ENCODE measurements at regions of chr15 and their contacts with region 1.

Region 1: GRCh38 chr15:78308422-78309032 is 9.1 kb upstream of the SKIC8 start:
- DNase-seq: peak; percentile 75
- H3K4me3 Mint-ChIP-seq: no peak overlapping the region
- H3K27ac Mint-ChIP-seq: no peak overlapping the region
- H3K4me1 Mint-ChIP-seq: no peaks in the 10 kb centered on the region
- H3K27me3 Mint-ChIP-seq: no peaks in the 10 kb centered on the region

Region 2: GRCh38 chr15:78415286-78415685 is 106.8 kb after region 1 on chr15:
- CTCF ChIA-PET with region 1: interaction called, 3 read pairs
- intact Hi-C with region 1: loop called (anchors 1 kb)
- DNase-seq: no peak
- H3K4me3 Mint-ChIP-seq: no peak overlapping the region
- H3K27ac Mint-ChIP-seq: no peak overlapping the region
- H3K4me1 Mint-ChIP-seq: no peaks in the 10 kb centered on the region
- H3K27me3 Mint-ChIP-seq: no peaks in the 10 kb centered on the region

Region 3: GRCh38 chr15:78422571-78423340 is 114.2 kb after region 1 on chr15:
- CTCF ChIA-PET with region 1: interaction called, 8 read pairs
- intact Hi-C with region 1: loop called (anchors 1 kb)
- DNase-seq: peak; percentile 76
- H3K4me3 Mint-ChIP-seq: no peak overlapping the region
- H3K27ac Mint-ChIP-seq: no peak overlapping the region
- H3K4me1 Mint-ChIP-seq: peaks cover 14% of the 10 kb centered on the region
- H3K27me3 Mint-ChIP-seq: peaks cover 8% of the 10 kb centered on the region

Region 4: DNA sequence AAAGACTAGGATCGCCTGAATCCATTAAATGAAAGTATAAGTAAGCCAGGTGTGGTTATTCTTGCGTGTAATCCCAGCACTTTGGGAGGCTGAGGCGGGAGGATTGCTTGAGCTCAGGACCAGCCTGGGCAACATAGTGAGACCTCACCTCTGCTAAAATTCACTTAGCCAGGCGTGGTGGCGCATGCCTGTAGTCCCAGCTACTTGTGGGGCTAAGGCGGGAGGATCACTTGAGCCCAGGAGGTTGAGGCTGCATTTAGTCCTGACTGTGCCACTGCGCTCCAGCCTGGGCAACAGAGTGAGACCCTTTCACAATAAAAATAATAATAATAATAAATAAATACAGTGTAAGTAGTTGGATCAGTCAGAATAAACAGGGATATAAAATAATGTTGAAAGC is 173.4 kb after region 1 on chr15:
- CTCF ChIA-PET with region 1: interaction called, 3 read pairs
- intact Hi-C with region 1: loop called (anchors 2 kb)
- DNase-seq: no peak
- H3K4me3 Mint-ChIP-seq: no peak overlapping the region
- H3K27ac Mint-ChIP-seq: no peak overlapping the region
- H3K4me1 Mint-ChIP-seq: peaks cover 2% of the 10 kb centered on the region
- H3K27me3 Mint-ChIP-seq: no peaks in the 10 kb centered on the region

Region 5: GRCh38 chr15:78709263-78709882 is 400.8 kb after region 1 on chr15:
- CTCF ChIA-PET with region 1: interaction called, 6 read pairs
- intact Hi-C with region 1: loop called (anchors 2 kb)
- DNase-seq: peak; percentile 79
- H3K4me3 Mint-ChIP-seq: no peak overlapping the region
- H3K27ac Mint-ChIP-seq: no peak overlapping the region
- H3K4me1 Mint-ChIP-seq: peaks cover 4% of the 10 kb centered on the region
- H3K27me3 Mint-ChIP-seq: peaks cover 31% of the 10 kb centered on the region